Endothelial cell of umbilical vein (primary cell): ENCODE measurements at regions of chr11 and their contacts with region 1.

Region 1: DNA sequence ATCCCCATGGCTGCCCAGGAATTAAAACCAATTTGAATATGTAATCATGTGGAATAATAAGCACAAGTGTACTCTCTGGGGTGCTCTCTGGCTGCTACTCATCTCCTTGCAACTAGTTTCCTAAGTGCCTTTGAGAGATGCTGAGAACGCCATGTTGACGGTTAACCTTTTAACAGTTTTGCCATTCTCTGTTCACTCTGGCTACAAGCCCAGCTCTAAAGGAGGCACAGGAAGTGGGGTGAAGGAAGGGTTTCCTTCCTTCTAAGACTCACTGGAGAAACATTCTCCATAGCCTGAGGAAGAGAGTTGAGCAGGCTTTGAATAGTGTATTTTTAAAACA is 122.0 kb upstream of the ZC3H12C start:
- DNase-seq: peak; percentile 94
- H3K4me3 ChIP-seq: peak overlapping the region in 1 of 3 experiments; percentile 53
- H3K27ac ChIP-seq: peak overlapping the region; percentile 76
- H3K4me1 ChIP-seq: peaks cover 23% of the 10 kb centered on the region
- H3K27me3 ChIP-seq: no peaks in the 10 kb centered on the region
- CTCF ChIP-seq: no peak
- POLR2A ChIP-seq: no peak

Region 2: GRCh38 chr11:109914809-109915653 is 56.1 kb before region 1 on chr11:
- CTCF ChIA-PET with region 1: interaction called, 3 read pairs
- POLR2A ChIA-PET with region 1: no interaction called
- dilution Hi-C with region 1: no loop called
- intact Hi-C with region 1: loop called (anchors 2 kb)
- DNase-seq: peak; percentile 94
- H3K4me3 ChIP-seq: peak overlapping the region in 1 of 3 experiments; percentile 40
- H3K27ac ChIP-seq: peak overlapping the region; percentile 94
- H3K4me1 ChIP-seq: peaks cover 23% of the 10 kb centered on the region
- H3K27me3 ChIP-seq: no peaks in the 10 kb centered on the region
- CTCF ChIP-seq: no peak
- POLR2A ChIP-seq: peak; percentile 35

Region 3: GRCh38 chr11:110026858-110027626 is 55.9 kb after region 1 on chr11:
- CTCF ChIA-PET with region 1: no interaction called
- POLR2A ChIA-PET with region 1: no interaction called
- dilution Hi-C with region 1: no loop called
- intact Hi-C with region 1: loop called (anchors 5 kb)
- DNase-seq: no peak
- H3K4me3 ChIP-seq: no peak overlapping the region
- H3K27ac ChIP-seq: no peak overlapping the region
- H3K4me1 ChIP-seq: peaks cover 8% of the 10 kb centered on the region
- H3K27me3 ChIP-seq: no peaks in the 10 kb centered on the region
- CTCF ChIP-seq: no peak
- POLR2A ChIP-seq: no peak

Region 4: GRCh38 chr11:110069158-110069737 is 98.1 kb after region 1 on chr11:
- CTCF ChIA-PET with region 1: interaction called, 8 read pairs
- POLR2A ChIA-PET with region 1: no interaction called
- dilution Hi-C with region 1: no loop called
- intact Hi-C with region 1: loop called (anchors 1 kb)
- DNase-seq: peak; percentile 97
- H3K4me3 ChIP-seq: no peak overlapping the region
- H3K27ac ChIP-seq: peak overlapping the region; percentile 95
- H3K4me1 ChIP-seq: peaks cover 22% of the 10 kb centered on the region
- H3K27me3 ChIP-seq: no peaks in the 10 kb centered on the region
- CTCF ChIP-seq: no peak
- POLR2A ChIP-seq: peak; percentile 71

Region 5: GRCh38 chr11:110327508-110327907 is 356.4 kb after region 1 on chr11:
- CTCF ChIA-PET with region 1: no interaction called
- POLR2A ChIA-PET with region 1: no interaction called
- dilution Hi-C with region 1: no loop called
- intact Hi-C with region 1: no loop called
- DNase-seq: no peak
- H3K4me3 ChIP-seq: no peak overlapping the region
- H3K27ac ChIP-seq: no peak overlapping the region
- H3K4me1 ChIP-seq: peaks cover 17% of the 10 kb centered on the region
- H3K27me3 ChIP-seq: no peaks in the 10 kb centered on the region
- CTCF ChIP-seq: no peak
- POLR2A ChIP-seq: no peak